GM12878 (cell line): ENCODE measurements at regions of chr14 and their contacts with region 1.

Region 1: DNA sequence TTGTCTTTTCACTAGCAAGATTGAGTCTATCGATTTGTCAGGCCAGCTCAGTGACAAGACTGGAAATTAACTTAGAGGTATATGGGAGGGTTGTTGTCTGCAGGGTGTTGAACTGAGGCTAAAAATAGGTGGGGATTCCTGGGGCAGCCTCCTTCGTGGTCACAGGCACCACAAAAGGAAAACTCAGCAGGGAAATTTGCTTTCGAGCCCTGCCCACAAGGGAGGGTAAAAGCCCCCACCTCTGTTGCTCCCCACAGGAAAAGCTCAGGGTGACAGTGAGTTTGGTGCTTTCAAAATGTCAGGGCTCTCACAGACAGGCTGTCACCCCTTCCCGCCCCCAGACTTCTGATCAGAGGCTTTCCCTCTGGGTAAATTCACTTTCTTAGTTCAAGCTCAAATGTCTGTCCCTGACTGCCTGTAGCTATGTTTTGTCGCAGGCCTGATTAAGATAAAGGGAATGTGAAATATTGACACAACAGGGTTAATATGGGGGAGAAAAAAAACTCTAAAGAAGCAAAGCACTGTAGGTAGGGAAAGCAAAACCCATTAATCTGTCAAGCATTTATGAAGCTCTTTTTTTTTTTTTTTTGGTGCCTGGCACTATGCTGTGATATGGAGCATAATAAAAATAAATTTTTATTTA is 11.7 kb upstream of the NFKBIA start:
- DNase-seq: peak; percentile 75
- ATAC-seq: peak; percentile 75
- H3K4me3 ChIP-seq: no peak overlapping the region; the same call in 1 of the 2 replicates
- H3K27ac ChIP-seq: peak overlapping the region; percentile 62
- H3K4me1 ChIP-seq: peaks cover 31% of the 10 kb centered on the region
- H3K27me3 ChIP-seq: no peaks in the 10 kb centered on the region
- CTCF ChIP-seq: no peak
- EP300 ChIP-seq: peak; percentile 65 to 67; a peak in 2 of 4 replicates
- POLR2A ChIP-seq: no peak
- RAD21 ChIP-seq: no peak

Region 2: GRCh38 chr14:34331728-34332623 is 1084.3 kb before region 1 on chr14:
- CTCF ChIA-PET with region 1: interaction called, 3 read pairs
- POLR2A ChIA-PET with region 1: no interaction called
- RAD21 ChIA-PET with region 1: no interaction called
- SMC1A ChIA-PET with region 1: interaction called, 4 read pairs
- in situ Hi-C with region 1: loop called (anchors 25 kb)
- intact Hi-C with region 1: loop called (anchors 5 kb)
- DNase-seq: peak; percentile 80
- ATAC-seq: peak; percentile 98
- H3K4me3 ChIP-seq: peak overlapping the region; percentile 12; the same call in 1 of the 2 replicates
- H3K27ac ChIP-seq: peak overlapping the region; percentile 90
- H3K4me1 ChIP-seq: peaks cover 15% of the 10 kb centered on the region
- H3K27me3 ChIP-seq: no peaks in the 10 kb centered on the region
- CTCF ChIP-seq: peak; percentile 76 to 86 (median 84)
- EP300 ChIP-seq: no peak
- POLR2A ChIP-seq: 0 out of 2 replicates have a peak, but pooled peaks have one; percentile 14
- RAD21 ChIP-seq: peak; percentile 84

Region 3: DNA sequence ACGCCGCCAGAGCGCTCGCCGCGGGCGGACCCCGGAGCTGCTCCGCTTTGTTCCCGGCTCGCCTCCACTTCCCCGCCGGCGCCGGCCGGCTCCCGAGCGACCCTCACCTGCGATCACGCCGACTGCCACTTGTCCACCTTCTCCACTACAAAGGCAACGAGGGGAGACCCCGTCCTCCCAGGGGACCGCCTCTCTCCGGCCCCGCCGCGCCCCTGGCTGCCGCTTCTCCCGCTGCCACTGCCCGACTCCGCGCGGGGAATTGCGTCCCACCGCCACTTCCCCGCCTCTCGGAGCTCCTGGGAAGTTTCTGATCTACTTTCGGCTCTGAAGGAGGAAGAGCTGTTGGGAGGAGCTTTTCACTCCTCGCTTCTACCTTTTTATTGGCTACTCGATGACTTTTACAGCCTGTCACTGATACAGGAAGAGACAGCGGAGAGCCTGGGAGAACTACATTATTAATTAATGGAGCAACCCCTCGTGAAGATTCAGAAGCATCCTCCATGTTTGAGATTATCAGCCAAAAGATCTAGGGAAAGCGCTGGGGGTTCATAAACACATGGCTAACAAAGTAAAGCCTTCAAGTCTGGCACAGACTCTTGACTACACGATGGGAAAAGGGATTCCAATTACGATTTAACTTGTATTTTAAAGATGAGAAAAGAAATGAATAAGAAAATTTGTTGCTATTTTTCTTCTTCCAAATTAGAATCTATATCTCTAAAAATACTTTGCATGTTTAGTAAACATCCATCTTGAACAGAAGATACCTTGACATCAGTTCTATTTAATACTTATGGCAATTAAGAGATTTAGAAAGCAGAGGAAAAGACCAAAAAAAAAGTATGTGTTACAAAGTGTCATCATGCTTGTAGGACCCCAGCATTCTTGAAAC is 541.0 kb before region 1 on chr14 and contains the start of gene BAZ1A:
- CTCF ChIA-PET with region 1: no interaction called
- POLR2A ChIA-PET with region 1: interaction called, 3 read pairs
- RAD21 ChIA-PET with region 1: interaction called, 4 read pairs
- SMC1A ChIA-PET with region 1: interaction called, 4 read pairs
- in situ Hi-C with region 1: no loop called
- intact Hi-C with region 1: loop called (anchors 10 kb)
- DNase-seq: peak; percentile 41
- ATAC-seq: peak; percentile 39
- H3K4me3 ChIP-seq: peak within 1 kb of the TSS; percentile 88
- H3K27ac ChIP-seq: peak within 1 kb of the TSS; percentile 98
- H3K4me1 ChIP-seq: no peaks in the 10 kb centered on the region; the same call in 1 of the 2 replicates
- H3K27me3 ChIP-seq: no peaks in the 10 kb centered on the region
- CTCF ChIP-seq: no peak
- EP300 ChIP-seq: no peak
- POLR2A ChIP-seq: peak; percentile 47
- RAD21 ChIP-seq: no peak
- polyA plus RNA-seq, gene BAZ1A: 38.5 to 39.9 TPM

Region 4: DNA sequence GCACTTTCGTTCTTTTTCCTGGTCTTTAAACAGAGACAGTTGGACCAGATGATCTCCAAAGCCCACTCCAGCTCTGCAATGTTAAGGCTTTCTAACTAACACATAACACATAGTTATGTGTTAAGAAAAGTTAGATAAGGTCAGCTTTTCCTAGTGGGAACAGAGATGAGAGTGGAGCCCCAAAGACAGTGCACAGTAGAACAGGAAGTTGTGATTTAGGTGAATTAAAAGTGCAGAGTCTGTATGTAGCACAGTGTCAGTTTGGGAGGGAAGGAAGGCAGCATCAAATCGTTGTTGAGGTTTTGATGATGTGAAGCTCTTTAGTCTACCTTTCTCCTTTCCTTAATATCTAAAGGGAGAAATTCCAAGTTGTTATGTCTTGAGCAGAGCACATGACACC is 262.2 kb before region 1 on chr14:
- CTCF ChIA-PET with region 1: interaction called, 10 read pairs
- POLR2A ChIA-PET with region 1: interaction called, 4 read pairs
- RAD21 ChIA-PET with region 1: interaction called, 4 read pairs
- SMC1A ChIA-PET with region 1: interaction called, 14 read pairs
- in situ Hi-C with region 1: no loop called
- intact Hi-C with region 1: no loop called
- DNase-seq: no peak
- ATAC-seq: no peak
- H3K4me3 ChIP-seq: no peak overlapping the region
- H3K27ac ChIP-seq: no peak overlapping the region
- H3K4me1 ChIP-seq: peaks cover 8% of the 10 kb centered on the region; the same call in 1 of the 2 replicates
- H3K27me3 ChIP-seq: no peaks in the 10 kb centered on the region
- CTCF ChIP-seq: no peak
- EP300 ChIP-seq: no peak
- POLR2A ChIP-seq: no peak
- RAD21 ChIP-seq: no peak

Region 5: DNA sequence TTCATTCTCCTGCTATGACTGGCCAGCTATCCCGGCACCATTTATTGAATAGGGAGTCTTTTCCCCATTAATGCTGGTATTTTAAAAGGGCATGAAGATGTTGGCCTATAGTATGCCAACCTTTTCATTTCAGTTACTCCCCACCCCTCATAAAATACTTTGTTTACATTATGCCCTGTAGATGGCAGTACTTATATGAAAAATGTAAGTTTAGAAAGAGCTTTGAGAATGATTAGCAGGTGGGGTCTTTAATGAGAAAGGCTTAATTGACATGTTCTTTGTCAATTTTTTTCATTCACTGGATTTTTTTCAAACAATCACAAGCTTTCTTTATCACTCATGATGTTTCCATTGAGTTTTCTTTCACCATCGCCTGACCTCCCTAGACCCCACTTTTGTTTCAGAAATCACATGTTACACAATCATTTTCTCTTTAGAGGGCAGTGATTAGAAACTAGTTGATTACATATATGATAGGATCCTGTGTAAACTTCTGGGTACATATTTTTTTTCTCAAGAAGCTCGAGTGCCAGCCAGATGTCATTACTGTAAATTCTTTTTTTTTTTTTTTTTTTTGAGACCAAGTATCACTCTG is 186.6 kb before region 1 on chr14:
- CTCF ChIA-PET with region 1: interaction called, 438 read pairs
- POLR2A ChIA-PET with region 1: interaction called, 3 read pairs
- RAD21 ChIA-PET with region 1: interaction called, 53 read pairs
- SMC1A ChIA-PET with region 1: interaction called, 145 read pairs
- in situ Hi-C with region 1: no loop called
- intact Hi-C with region 1: no loop called
- DNase-seq: no peak
- ATAC-seq: peak; percentile 79
- H3K4me3 ChIP-seq: no peak overlapping the region
- H3K27ac ChIP-seq: no peak overlapping the region
- H3K4me1 ChIP-seq: peaks cover 5% of the 10 kb centered on the region; the same call in 1 of the 2 replicates
- H3K27me3 ChIP-seq: no peaks in the 10 kb centered on the region
- CTCF ChIP-seq: peak; percentile 33 to 47 (median 40); a peak in 5 of 6 replicates
- EP300 ChIP-seq: no peak
- POLR2A ChIP-seq: no peak
- RAD21 ChIP-seq: peak; percentile 65

Region 6: DNA sequence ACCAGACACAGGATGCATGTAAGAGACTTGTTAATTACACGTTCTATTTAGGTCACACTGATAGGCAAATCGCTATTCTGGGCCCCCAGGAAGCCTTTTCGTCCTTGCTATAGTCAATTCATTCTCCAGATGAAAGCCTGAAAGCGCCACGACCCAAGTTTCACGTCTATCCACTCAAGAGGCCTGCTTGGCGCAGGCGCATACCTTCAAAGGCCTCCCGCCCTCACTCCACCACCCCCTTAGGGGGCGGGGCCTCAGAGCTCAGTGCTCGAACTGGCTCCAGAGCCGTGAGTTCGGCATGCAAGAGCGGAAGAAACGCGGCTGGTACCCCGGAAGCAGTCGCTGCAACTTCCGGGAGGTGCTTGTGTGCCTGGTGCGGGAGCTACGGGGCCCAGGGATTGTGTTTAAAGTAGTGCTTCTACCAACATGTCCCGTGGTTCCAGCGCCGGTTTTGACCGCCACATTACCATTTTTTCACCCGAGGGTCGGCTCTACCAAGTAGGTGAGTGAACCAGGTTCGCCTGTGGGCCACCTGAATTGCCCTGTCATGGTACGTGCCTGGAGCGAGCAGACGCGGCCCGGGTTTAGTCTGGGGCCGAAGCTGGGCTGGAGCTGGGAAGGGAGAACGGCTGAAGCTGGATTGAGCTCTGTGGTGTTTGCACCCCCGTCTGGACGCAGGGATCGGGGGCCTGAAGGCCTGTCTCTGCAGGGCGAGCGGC is 124.0 kb before region 1 on chr14 and contains the start of gene PSMA6:
- CTCF ChIA-PET with region 1: interaction called, 18 read pairs
- POLR2A ChIA-PET with region 1: interaction called, 8 read pairs
- RAD21 ChIA-PET with region 1: interaction called, 32 read pairs
- SMC1A ChIA-PET with region 1: interaction called, 25 read pairs
- in situ Hi-C with region 1: no loop called
- intact Hi-C with region 1: no loop called
- DNase-seq: peak; percentile 98
- ATAC-seq: peak; percentile 90
- H3K4me3 ChIP-seq: peak within 1 kb of the TSS; percentile 86
- H3K27ac ChIP-seq: peak within 1 kb of the TSS; percentile 80
- H3K4me1 ChIP-seq: peaks cover 18% of the 10 kb centered on the region
- H3K27me3 ChIP-seq: no peaks in the 10 kb centered on the region
- CTCF ChIP-seq: no peak
- EP300 ChIP-seq: 0 out of 4 replicates have a peak, but pooled peaks have one; percentile 20 to 36
- POLR2A ChIP-seq: peak; percentile 83
- RAD21 ChIP-seq: no peak
- polyA plus RNA-seq, gene PSMA6: 1,136 to 1,363 TPM